ENCODE measurements at regions of chr1 and their contacts with region 1.

Region 1: GRCh38 chr1:112232848-112233247 is 163.2 kb upstream of the CTTNBP2NL start:
- DNase-seq: no peak
- H3K4me3 ChIP-seq: no peak overlapping the region
- H3K27ac ChIP-seq: no peak overlapping the region
- H3K4me1 ChIP-seq: no peaks in the 10 kb centered on the region
- H3K27me3 ChIP-seq: no peaks in the 10 kb centered on the region
- CTCF ChIP-seq: no peak
- EP300 ChIP-seq: no peak
- POLR2A ChIP-seq: no peak

Region 2: DNA sequence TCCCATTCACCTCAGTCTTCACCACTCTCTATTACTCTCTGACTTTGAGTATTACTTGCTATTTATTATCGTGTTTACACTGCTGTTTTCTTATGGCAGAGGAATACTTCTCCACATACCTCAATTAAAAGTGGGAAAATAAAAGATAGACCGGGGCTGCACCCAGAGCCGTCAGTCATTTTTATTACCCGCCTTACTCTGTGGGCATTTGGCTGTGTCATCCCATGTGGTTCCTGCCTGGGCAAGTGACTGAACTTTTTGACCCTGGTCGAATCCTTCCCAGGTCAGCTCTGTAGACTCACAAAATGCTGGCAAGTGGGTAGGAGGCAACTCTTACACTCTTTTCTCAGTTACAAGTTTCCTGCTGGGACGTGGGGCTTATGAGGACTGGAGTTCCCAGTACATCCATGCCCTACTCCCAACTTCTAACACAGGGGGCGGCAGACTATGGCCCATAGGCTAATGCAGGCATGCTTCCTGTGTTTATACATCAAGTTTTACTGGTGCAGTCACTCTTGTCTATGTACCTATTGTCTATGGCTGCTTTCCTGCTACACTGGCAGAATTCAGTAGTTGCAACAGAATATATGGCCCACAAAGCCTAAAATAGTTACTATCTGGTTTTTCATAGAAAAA is 173.9 kb before region 1 on chr1:
- in situ Hi-C with region 1: no loop called
- intact Hi-C with region 1: no loop called
- DNase-seq: no peak
- H3K4me3 ChIP-seq: no peak overlapping the region
- H3K27ac ChIP-seq: no peak overlapping the region
- H3K4me1 ChIP-seq: no peaks in the 10 kb centered on the region
- H3K27me3 ChIP-seq: no peaks in the 10 kb centered on the region
- CTCF ChIP-seq: no peak
- EP300 ChIP-seq: no peak
- POLR2A ChIP-seq: no peak

Region 3: DNA sequence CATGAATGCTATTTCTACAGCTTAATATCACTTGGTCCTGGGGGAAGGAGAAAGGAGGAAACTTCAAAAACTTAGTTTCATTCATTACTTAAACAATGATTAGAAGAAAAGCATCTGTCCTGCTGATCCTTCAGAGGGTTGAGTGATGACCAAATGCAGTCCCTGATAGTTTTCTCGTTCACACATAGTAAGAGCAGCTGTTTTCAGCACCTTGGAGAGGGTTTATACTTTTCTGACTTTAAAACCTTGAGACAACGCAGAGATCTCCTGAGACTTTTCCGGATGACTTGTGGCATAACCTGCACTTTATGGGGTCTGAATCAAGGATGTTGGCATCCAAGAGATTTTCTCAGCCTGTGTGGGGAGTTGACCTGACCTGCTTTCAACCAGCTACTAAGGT is 149.4 kb before region 1 on chr1:
- in situ Hi-C with region 1: no loop called
- intact Hi-C with region 1: no loop called
- DNase-seq: no peak
- H3K4me3 ChIP-seq: no peak overlapping the region
- H3K27ac ChIP-seq: no peak overlapping the region
- H3K4me1 ChIP-seq: no peaks in the 10 kb centered on the region
- H3K27me3 ChIP-seq: no peaks in the 10 kb centered on the region
- CTCF ChIP-seq: no peak
- EP300 ChIP-seq: no peak
- POLR2A ChIP-seq: no peak

Region 4: GRCh38 chr1:112312315-112312714 is 79.5 kb after region 1 on chr1:
- in situ Hi-C with region 1: no loop called
- intact Hi-C with region 1: loop called (anchors 2 kb)
- DNase-seq: no peak
- H3K4me3 ChIP-seq: no peak overlapping the region
- H3K27ac ChIP-seq: no peak overlapping the region
- H3K4me1 ChIP-seq: peaks cover 0 to 4% (median 0%) of the 10 kb centered on the region in 4 donors
- H3K27me3 ChIP-seq: no peaks in the 10 kb centered on the region
- CTCF ChIP-seq: no peak
- EP300 ChIP-seq: no peak
- POLR2A ChIP-seq: no peak

Measured in transverse colon (tissue), 4 donors.